ENCODE measurements at regions of chr2 and their contacts with region 1.

Region 1: GRCh38 chr2:218033590-218034496 is 31.0 kb upstream of the TNS1 start:
- DNase-seq: peak; percentile 45
- H3K4me3 ChIP-seq: peak overlapping the region; percentile 40
- H3K27ac ChIP-seq: no peak overlapping the region
- H3K4me1 ChIP-seq: peaks cover 12% of the 10 kb centered on the region
- H3K27me3 ChIP-seq: peaks cover 4% of the 10 kb centered on the region
- CTCF ChIP-seq: no peak

Region 2: GRCh38 chr2:217934321-217935131 is 99.3 kb before region 1 on chr2:
- CTCF ChIA-PET with region 1: no interaction called
- POLR2A ChIA-PET with region 1: no interaction called
- intact Hi-C with region 1: loop called (anchors 5 kb)
- DNase-seq: peak; percentile 42
- H3K4me3 ChIP-seq: no peak overlapping the region
- H3K27ac ChIP-seq: peak overlapping the region; percentile 42
- H3K4me1 ChIP-seq: peaks cover 41% of the 10 kb centered on the region
- H3K27me3 ChIP-seq: no peaks in the 10 kb centered on the region
- CTCF ChIP-seq: no peak

Region 3: DNA sequence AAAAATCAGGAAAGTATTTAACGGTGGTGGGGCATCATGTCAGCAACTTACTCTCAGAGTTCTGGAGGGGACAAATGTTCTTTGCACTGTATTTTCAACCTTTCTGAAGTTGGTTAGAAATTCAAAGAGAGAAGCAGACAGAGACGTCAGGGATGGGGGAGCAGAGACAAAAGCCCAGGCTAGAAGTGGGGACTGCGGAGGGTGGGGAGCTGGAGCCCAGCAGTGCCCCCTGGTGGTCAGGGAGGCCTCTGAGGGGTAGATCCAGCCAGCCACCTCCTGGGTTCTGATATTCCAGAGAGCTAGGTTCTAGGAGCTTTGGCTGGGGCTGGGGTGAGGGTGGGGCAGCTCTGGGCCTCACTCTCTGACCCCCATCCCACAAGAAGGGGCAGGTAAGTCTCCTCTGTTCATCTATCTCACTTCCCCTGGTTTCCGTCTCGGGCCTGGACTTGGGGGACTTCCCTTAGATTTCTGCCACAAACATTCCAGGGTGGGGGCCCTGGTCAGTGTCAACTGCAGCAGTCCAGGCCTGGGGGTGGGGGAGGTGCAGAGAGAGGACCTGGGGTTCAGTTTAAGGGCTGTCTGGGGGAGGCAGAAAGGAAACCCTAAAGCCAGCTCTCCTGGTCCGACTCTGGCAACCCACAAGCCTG is 39.9 kb before region 1 on chr2:
- CTCF ChIA-PET with region 1: no interaction called
- POLR2A ChIA-PET with region 1: no interaction called
- intact Hi-C with region 1: loop called (anchors 2 kb)
- DNase-seq: peak; percentile 69
- H3K4me3 ChIP-seq: no peak overlapping the region
- H3K27ac ChIP-seq: no peak overlapping the region
- H3K4me1 ChIP-seq: peaks cover 11% of the 10 kb centered on the region
- H3K27me3 ChIP-seq: no peaks in the 10 kb centered on the region
- CTCF ChIP-seq: peak; percentile 89

Measured in A673 (cell line).